ENCODE measurements at regions of chr2 and their contacts with region 1.

Region 1: DNA sequence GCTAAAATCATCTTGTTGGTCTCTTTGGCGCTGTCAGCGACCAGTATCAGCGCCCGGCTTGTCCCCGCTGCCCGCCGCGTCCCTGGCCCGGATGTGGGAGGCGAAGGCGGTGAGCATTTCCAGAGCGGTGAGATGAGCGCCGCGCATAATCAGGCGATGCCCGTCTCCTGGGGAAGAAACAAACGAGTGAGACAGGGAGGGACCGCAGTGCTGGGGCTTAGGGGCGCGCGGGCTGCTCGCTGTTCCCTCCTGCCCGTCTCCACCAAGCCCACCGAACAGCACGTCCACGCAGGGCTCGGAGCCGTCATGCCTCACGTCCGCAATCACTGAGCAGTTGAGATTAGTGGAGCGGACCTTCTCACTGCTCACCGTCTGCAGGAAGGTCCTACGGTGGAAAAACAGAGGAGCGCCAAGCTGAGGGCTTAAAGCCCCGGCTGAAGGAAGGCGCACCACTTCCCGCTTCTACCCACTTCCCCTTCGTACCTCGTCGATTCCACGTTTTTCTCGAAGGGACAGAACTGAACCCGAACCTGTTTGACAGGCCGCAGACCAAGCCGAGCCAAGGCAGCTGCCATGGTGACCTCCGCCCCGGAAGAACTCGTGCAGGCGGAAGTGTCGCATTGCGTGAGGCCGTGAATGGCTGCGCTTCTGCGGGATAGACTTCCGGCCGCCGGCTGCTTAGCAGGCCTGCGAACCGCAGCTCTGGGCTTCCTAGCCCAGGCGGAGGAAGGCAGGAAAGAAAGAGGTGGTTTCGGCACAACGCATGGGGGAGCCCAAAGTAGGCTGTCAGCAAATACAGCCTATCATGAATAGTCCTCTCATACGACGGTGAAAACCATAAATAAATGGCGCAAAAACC is at the start of gene MRPL53:
- DNase-seq: peak; percentile 97
- ATAC-seq: peak; percentile 92
- H3K4me3 Mint-ChIP-seq: peak within 1 kb of the TSS; percentile 98
- H3K27ac Mint-ChIP-seq: peak within 1 kb of the TSS; percentile 93
- H3K4me1 Mint-ChIP-seq: peaks cover 21% of the 10 kb centered on the region
- H3K27me3 Mint-ChIP-seq: no peaks in the 10 kb centered on the region
- total RNA-seq, gene MRPL53: 87.4 to 88.5 TPM

Region 2: DNA sequence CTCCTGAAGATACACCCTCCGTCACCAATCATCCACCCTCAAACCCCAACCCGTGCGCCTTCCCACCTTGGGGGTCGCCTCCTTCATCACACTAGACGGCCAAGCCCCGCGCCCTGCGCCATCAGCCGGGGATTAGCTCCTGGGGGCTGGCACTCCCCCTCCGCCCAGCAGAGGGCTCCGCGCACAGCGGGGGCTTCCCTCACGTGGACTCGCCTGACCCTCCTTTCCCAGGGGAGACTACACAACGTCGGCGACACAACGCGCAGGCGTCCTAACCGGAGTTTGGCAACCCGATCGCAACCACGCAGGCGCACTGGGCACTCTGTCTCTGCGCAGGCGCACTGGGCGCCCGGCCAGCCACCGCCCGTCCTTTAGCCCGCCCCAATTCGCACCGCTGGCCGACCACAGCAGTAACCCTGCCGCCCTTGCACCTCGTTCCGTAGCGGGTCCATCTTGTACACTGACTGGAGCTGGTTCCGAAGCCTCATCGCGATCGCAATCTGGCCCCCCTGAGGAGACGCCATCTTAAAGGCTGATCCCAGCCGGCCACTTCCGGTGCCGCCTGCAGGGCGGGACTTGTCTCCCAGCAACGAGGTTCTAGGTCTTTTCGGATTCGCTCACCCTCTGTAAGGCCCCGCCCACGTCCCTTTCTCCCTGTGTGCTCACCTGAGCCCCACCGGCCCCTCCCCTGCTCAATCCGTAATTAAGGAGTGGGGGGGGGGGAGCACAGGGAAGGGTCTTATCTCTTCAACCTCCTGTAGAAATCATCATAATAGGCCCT is 35.0 kb after region 1 on chr2 and contains the start of gene PCGF1:
- CTCF ChIA-PET with region 1: interaction called, 4 read pairs
- POLR2A ChIA-PET with region 1: no interaction called
- intact Hi-C with region 1: loop called in 1 of 2 experiments (anchors 1 kb)
- DNase-seq: peak; percentile 99
- ATAC-seq: peak; percentile 92
- H3K4me3 Mint-ChIP-seq: peak within 1 kb of the TSS; percentile 93
- H3K27ac Mint-ChIP-seq: peak within 1 kb of the TSS; percentile 99
- H3K4me1 Mint-ChIP-seq: peaks cover 40% of the 10 kb centered on the region
- H3K27me3 Mint-ChIP-seq: peaks cover 38% of the 10 kb centered on the region
- total RNA-seq, gene PCGF1: 21.7 to 28.7 TPM

Region 3: GRCh38 chr2:74653985-74654882 is 181.9 kb after region 1 on chr2 and contains the start of gene SEMA4F:
- CTCF ChIA-PET with region 1: no interaction called
- POLR2A ChIA-PET with region 1: no interaction called
- intact Hi-C with region 1: loop called in 1 of 2 experiments (anchors 2 kb)
- DNase-seq: peak; percentile 97
- ATAC-seq: peak; percentile 100
- H3K4me3 Mint-ChIP-seq: peak within 1 kb of the TSS; percentile 76
- H3K27ac Mint-ChIP-seq: peak within 1 kb of the TSS; percentile 49
- H3K4me1 Mint-ChIP-seq: peaks cover 13% of the 10 kb centered on the region
- H3K27me3 Mint-ChIP-seq: peaks cover 7% of the 10 kb centered on the region
- total RNA-seq, gene SEMA4F: 5.7 to 7.4 TPM

Region 4: GRCh38 chr2:74685408-74685807 is 213.1 kb after region 1 on chr2:
- CTCF ChIA-PET with region 1: no interaction called
- POLR2A ChIA-PET with region 1: no interaction called
- intact Hi-C with region 1: no loop called
- DNase-seq: no peak
- ATAC-seq: no peak
- H3K4me3 Mint-ChIP-seq: no peak overlapping the region
- H3K27ac Mint-ChIP-seq: no peak overlapping the region
- H3K4me1 Mint-ChIP-seq: no peaks in the 10 kb centered on the region
- H3K27me3 Mint-ChIP-seq: no peaks in the 10 kb centered on the region

Measured in activated CD4-positive, alpha-beta T cell treated with anti-CD3 and anti-CD28 coated beads for 36 hours (primary cell).